WTC11 (cell line): ENCODE measurements at regions of chr15 and their contacts with region 1.

Region 1: GRCh38 chr15:32029862-32030781 is at the start of gene CHRNA7:
- DNase-seq: peak; percentile 77
- ATAC-seq: peak; percentile 83
- H3K4me3 Mint-ChIP-seq: peak within 1 kb of the TSS; percentile 82
- H3K27ac Mint-ChIP-seq: no peak within 1 kb of the TSS
- H3K4me1 Mint-ChIP-seq: peaks cover 17% of the 10 kb centered on the region
- H3K27me3 Mint-ChIP-seq: peaks cover 30% of the 10 kb centered on the region
- CTCF ChIP-seq: no peak
- total RNA-seq, gene CHRNA7: 5.6 to 7.8 TPM (median 7.3 TPM) in 3 replicates

Region 2: DNA sequence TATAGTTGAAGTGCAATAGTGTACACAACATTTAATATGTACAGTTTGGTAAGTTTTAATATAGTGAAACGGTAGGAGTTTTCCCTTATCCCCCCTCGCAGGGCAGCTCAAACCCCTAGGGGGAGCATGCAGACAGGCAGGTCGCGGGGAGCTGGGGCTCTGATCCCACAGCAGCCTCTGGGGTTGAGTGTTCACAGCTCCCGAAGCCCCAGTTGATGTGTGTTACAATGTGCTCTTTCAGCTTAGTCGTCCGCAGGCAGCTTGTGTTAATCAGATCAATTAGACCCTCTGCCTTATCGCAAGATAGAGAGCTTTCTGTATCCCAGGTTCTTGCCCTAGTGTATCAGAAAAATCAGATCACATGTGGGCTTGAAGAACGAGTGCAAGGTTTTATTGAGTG is 142.9 kb before region 1 on chr15:
- CTCF ChIA-PET with region 1: interaction called, 14 read pairs
- POLR2A ChIA-PET with region 1: no interaction called
- DNase-seq: peak; percentile 64
- ATAC-seq: peak; percentile 95
- H3K4me3 Mint-ChIP-seq: no peak overlapping the region; the same call in 1 of the 2 replicates
- H3K27ac Mint-ChIP-seq: no peak overlapping the region
- H3K4me1 Mint-ChIP-seq: no peaks in the 10 kb centered on the region
- H3K27me3 Mint-ChIP-seq: peaks cover 2% of the 10 kb centered on the region; the same call in 1 of the 2 replicates
- CTCF ChIP-seq: no peak

Region 3: DNA sequence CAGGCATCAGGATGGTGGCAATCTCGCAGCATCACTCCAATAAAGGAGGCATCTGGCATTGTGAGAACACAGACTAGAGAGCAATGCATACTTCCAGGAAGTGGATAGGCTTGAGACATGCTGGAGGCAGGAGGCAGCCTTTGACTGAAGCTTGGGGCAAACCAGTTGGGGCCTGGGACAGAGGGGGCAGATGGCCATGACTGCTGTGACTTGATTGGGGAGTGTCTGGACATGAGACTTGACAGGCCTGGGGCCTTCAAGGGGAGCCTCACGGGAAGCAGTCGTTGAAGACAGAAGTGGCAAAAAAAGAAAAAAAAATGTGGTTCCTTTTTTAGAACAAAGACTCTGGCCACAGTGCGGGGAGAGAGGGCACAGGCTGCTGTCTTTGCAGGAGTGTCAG is 44.5 kb before region 1 on chr15:
- CTCF ChIA-PET with region 1: interaction called, 23 read pairs
- POLR2A ChIA-PET with region 1: no interaction called
- DNase-seq: no peak
- ATAC-seq: no peak
- H3K4me3 Mint-ChIP-seq: no peak overlapping the region
- H3K27ac Mint-ChIP-seq: no peak overlapping the region
- H3K4me1 Mint-ChIP-seq: peaks cover 24% of the 10 kb centered on the region
- H3K27me3 Mint-ChIP-seq: no peaks in the 10 kb centered on the region
- CTCF ChIP-seq: no peak

Region 4: GRCh38 chr15:32003558-32003957 is 26.6 kb before region 1 on chr15:
- CTCF ChIA-PET with region 1: interaction called, 19 read pairs
- POLR2A ChIA-PET with region 1: no interaction called
- DNase-seq: no peak
- ATAC-seq: peak; percentile 59
- H3K4me3 Mint-ChIP-seq: no peak overlapping the region
- H3K27ac Mint-ChIP-seq: no peak overlapping the region
- H3K4me1 Mint-ChIP-seq: no peaks in the 10 kb centered on the region
- H3K27me3 Mint-ChIP-seq: no peaks in the 10 kb centered on the region; the same call in 1 of the 2 replicates
- CTCF ChIP-seq: no peak

Region 5: DNA sequence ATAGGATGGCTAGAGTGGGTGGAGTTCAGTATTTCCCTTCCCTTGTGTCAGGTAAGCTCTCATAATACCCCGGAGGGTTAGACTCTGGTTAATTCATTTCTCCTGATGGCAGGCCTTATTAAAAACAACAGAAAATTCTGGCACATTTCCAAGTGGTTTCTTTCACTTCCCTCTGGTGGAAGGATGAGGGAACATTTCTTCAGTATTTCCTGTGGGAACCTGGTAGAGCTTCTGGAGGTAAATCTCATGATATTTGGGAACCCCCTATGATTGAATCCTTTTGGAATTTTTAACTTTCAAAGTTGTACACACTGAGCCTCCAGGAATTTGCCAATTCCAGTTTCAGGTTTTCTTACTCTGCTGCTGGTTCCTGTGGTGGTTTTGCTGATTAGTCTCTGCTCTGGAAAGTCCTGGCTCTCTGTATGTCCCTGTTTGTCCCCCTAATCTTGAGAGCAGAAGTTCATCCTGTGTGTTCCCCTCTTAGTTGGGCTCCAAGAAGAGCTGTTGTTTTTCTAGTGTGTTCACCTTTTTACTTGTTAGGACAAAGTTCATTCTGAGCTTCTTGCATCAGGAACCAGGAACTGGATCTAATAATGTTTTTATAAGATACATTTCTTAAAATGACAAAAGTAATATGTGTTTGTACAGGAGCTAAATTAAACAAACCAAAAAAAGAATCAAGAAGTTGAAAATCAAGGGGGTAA is 12.3 kb after region 1 on chr15:
- CTCF ChIA-PET with region 1: interaction called, 21 read pairs
- POLR2A ChIA-PET with region 1: no interaction called
- DNase-seq: no peak
- ATAC-seq: no peak
- H3K4me3 Mint-ChIP-seq: no peak overlapping the region
- H3K27ac Mint-ChIP-seq: no peak overlapping the region; the same call in 1 of the 2 replicates
- H3K4me1 Mint-ChIP-seq: peaks cover 16% of the 10 kb centered on the region
- H3K27me3 Mint-ChIP-seq: no peaks in the 10 kb centered on the region
- CTCF ChIP-seq: no peak

Region 6: DNA sequence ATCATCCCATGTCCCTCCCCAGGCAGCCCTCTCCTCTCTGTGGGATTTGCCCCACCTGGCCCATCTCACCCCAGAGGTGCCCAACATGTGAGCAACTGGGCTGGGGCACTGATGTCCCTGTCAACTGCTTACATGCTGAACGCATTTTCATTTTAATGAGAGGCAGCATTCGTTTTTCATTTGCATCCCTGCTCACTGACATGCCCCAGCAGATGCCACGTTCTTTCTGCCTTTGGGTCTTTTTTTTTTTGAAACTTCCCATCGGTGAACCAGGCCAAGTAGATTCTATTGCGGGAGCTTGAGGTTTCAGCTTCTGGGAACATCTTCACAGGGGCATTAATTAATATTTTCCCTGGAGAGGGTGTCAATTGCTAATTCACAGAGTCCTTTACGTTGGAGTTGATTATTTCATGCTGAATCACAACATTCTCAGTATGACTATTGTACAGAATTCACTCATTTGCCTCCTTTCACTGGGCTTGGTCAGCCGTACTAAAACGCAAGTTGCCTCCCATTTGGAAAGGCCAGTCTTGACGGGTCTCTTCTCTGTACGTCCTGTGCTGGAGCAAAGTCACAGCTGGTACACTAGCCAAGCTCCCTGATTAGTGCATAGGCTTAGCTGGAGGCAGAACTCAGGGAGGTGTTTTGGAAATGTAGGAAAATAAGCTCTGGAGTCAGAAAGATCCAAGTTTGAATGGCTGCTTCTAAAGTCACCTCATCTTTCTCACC is 70.0 kb after region 1 on chr15:
- CTCF ChIA-PET with region 1: interaction called, 12 read pairs
- POLR2A ChIA-PET with region 1: no interaction called
- DNase-seq: no peak
- ATAC-seq: no peak
- H3K4me3 Mint-ChIP-seq: no peak overlapping the region
- H3K27ac Mint-ChIP-seq: no peak overlapping the region
- H3K4me1 Mint-ChIP-seq: peaks cover 45% of the 10 kb centered on the region
- H3K27me3 Mint-ChIP-seq: no peaks in the 10 kb centered on the region; the same call in 1 of the 2 replicates
- CTCF ChIP-seq: no peak

Region 7: DNA sequence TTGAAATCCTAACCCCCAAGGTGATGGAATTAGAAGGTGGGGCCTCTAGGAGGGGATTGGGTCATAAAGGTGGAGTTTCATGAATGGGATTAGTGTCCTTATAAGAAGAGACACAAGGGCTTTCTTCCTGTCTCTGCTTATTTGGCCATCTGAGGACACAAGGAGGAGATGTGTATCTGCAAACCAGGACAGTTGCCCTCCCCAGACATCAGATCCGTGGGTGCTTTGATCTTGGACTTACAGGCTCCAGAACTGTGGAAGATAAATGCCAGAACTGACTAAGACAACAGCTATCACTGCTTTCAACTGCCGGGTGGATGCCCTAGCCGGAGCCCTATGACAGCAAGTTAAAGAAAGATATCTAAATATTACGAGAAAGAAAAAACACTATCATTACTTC is 94.6 kb after region 1 on chr15:
- CTCF ChIA-PET with region 1: interaction called, 13 read pairs
- POLR2A ChIA-PET with region 1: no interaction called
- DNase-seq: no peak
- ATAC-seq: no peak
- H3K4me3 Mint-ChIP-seq: no peak overlapping the region
- H3K27ac Mint-ChIP-seq: no peak overlapping the region
- H3K4me1 Mint-ChIP-seq: peaks cover 21% of the 10 kb centered on the region
- H3K27me3 Mint-ChIP-seq: no peaks in the 10 kb centered on the region
- CTCF ChIP-seq: no peak